B cell (primary cell): ENCODE measurements at regions of chr7 and their contacts with region 1.

Region 1: DNA sequence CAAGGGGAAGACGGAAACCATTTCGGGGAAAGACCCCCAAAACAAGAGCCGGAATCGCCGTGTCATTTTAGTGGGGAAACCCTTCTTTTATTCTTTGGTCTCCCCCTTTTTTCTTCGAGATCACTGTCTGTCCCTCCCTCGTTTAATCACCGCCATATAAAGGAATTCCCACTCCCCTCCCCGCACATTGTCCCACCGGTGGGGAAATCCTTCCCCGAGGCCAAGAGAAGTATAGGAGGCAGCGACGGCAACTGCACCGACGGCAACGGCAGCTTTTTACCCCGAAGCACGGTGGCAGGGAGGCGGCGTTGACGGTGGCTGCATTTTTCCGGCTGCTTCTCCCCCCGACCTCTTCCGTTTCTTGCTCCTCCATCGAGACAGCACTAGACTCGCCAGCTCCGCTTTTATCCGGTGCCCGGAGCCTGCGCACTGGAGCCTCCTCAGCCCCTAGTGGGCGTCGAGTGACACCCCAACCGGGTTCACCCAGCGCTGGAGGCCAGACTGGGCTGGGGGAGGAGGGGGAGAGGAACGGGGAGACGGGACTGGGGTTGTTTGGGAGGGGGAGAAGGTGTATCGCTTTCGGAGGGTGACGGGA is 687 bp upstream of the KMT2E start:
- DNase-seq: peak; percentile 95
- ATAC-seq: peak; percentile 57
- H3K4me3 ChIP-seq: peak overlapping the region; percentile 95 to 99 (median 97)
- H3K4me3 Mint-ChIP-seq: peak overlapping the region; percentile 99
- H3K27ac ChIP-seq: peak overlapping the region; percentile 100
- H3K27ac Mint-ChIP-seq: peak overlapping the region; percentile 100
- H3K4me1 ChIP-seq: peaks cover 33 to 52% of the 10 kb centered on the region in 2 donors
- H3K4me1 Mint-ChIP-seq: peaks cover 56% of the 10 kb centered on the region
- H3K27me3 ChIP-seq: no peaks in the 10 kb centered on the region
- H3K27me3 Mint-ChIP-seq: no peaks in the 10 kb centered on the region
- CTCF ChIP-seq: peak; percentile 59

Region 2: GRCh38 chr7:105028004-105028403 is 14.7 kb after region 1 on chr7:
- CTCF ChIA-PET with region 1: interaction called, 15 read pairs
- POLR2A ChIA-PET with region 1: interaction called, 19 read pairs
- intact Hi-C with region 1: loop called (anchors 1 kb)
- DNase-seq: peak; percentile 50
- ATAC-seq: peak; percentile 74
- H3K4me3 ChIP-seq: no peak overlapping the region
- H3K4me3 Mint-ChIP-seq: peak overlapping the region; percentile 64
- H3K27ac ChIP-seq: peak overlapping the region in 1 of 2 donors; percentile 63
- H3K27ac Mint-ChIP-seq: peak overlapping the region; percentile 65
- H3K4me1 ChIP-seq: peaks cover 44 to 69% of the 10 kb centered on the region in 2 donors
- H3K4me1 Mint-ChIP-seq: peaks cover 75% of the 10 kb centered on the region
- H3K27me3 ChIP-seq: no peaks in the 10 kb centered on the region
- H3K27me3 Mint-ChIP-seq: no peaks in the 10 kb centered on the region
- CTCF ChIP-seq: no peak

Region 3: GRCh38 chr7:105068886-105069285 is 55.6 kb after region 1 on chr7:
- CTCF ChIA-PET with region 1: interaction called, 4 read pairs
- POLR2A ChIA-PET with region 1: interaction called, 11 read pairs
- intact Hi-C with region 1: no loop called
- DNase-seq: no peak
- ATAC-seq: no peak
- H3K4me3 ChIP-seq: no peak overlapping the region
- H3K4me3 Mint-ChIP-seq: no peak overlapping the region
- H3K27ac ChIP-seq: no peak overlapping the region
- H3K27ac Mint-ChIP-seq: no peak overlapping the region
- H3K4me1 ChIP-seq: no peaks in the 10 kb centered on the region
- H3K4me1 Mint-ChIP-seq: peaks cover 3% of the 10 kb centered on the region
- H3K27me3 ChIP-seq: no peaks in the 10 kb centered on the region
- H3K27me3 Mint-ChIP-seq: no peaks in the 10 kb centered on the region
- CTCF ChIP-seq: no peak

Region 4: GRCh38 chr7:105522062-105522936 is 509.0 kb after region 1 on chr7 and contains the start of gene PUS7:
- CTCF ChIA-PET with region 1: no interaction called
- POLR2A ChIA-PET with region 1: no interaction called
- intact Hi-C with region 1: loop called (anchors 5 kb)
- DNase-seq: peak; percentile 90
- ATAC-seq: peak; percentile 93
- H3K4me3 ChIP-seq: peak within 1 kb of the TSS; percentile 21 to 70 (median 59)
- H3K4me3 Mint-ChIP-seq: peak within 1 kb of the TSS; percentile 98
- H3K27ac ChIP-seq: peak within 1 kb of the TSS; percentile 57 to 62
- H3K27ac Mint-ChIP-seq: peak within 1 kb of the TSS; percentile 90
- H3K4me1 ChIP-seq: peaks cover 13 to 22% of the 10 kb centered on the region in 2 donors
- H3K4me1 Mint-ChIP-seq: peaks cover 23% of the 10 kb centered on the region
- H3K27me3 ChIP-seq: no peaks in the 10 kb centered on the region
- H3K27me3 Mint-ChIP-seq: no peaks in the 10 kb centered on the region
- CTCF ChIP-seq: no peak
- total RNA-seq, gene PUS7: 7.1 and 7.7 TPM in 2 replicates